ENCODE measurements at regions of chr18 and their contacts with region 1.

Region 1: DNA sequence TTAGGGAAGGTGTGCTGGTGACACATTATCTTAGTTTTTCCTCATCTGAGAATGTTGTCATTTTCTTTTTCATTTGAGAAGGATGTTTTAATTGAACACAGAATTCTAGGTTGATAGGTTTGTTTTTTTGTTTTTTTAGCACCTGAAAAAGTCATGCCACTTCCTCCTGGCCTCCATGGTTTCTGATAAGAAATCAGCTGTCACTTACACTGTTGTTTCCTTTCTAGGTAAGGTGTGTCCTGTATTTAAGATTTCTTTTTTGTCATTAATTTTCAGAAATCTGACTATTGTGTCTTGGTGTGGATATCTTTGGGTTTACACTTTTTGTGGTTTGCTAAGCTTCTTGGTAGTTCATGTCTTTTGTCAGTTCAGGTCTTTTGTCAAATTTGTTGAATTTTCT is 99.3 kb downstream of the ROCK1 start:
- DNase-seq: no peak
- ATAC-seq: no peak
- H3K4me3 Mint-ChIP-seq: no peak overlapping the region
- H3K27ac Mint-ChIP-seq: peak overlapping the region; percentile 2
- H3K4me1 Mint-ChIP-seq: no peaks in the 10 kb centered on the region
- H3K27me3 Mint-ChIP-seq: no peaks in the 10 kb centered on the region

Region 2: DNA sequence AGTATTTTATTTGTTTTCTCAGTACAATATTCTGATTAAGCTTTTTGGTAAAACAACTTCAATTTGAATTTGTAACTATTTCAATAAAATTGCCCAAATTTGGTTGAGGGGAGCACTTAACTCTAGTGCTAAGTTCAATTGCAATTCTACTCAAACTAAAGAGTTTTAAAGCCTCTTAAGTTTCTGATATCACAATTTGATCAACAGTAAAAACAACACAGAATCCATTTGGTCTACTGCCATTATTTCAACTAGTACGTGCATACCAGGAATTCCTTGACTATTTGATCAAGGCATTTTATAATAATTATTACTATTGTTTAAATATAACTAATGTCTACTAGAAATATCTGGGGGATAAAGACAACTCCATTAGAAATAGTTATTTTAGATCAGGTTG is 51.6 kb before region 1 on chr18:
- CTCF ChIA-PET with region 1: no interaction called
- POLR2A ChIA-PET with region 1: no interaction called
- intact Hi-C with region 1: loop called in 1 of 2 experiments (anchors 5 kb)
- DNase-seq: no peak
- ATAC-seq: no peak
- H3K4me3 Mint-ChIP-seq: no peak overlapping the region
- H3K27ac Mint-ChIP-seq: no peak overlapping the region
- H3K4me1 Mint-ChIP-seq: peaks cover 2% of the 10 kb centered on the region
- H3K27me3 Mint-ChIP-seq: no peaks in the 10 kb centered on the region

Region 3: GRCh38 chr18:20971886-20972267 is 40.4 kb before region 1 on chr18:
- CTCF ChIA-PET with region 1: no interaction called
- POLR2A ChIA-PET with region 1: no interaction called
- intact Hi-C with region 1: loop called in 1 of 2 experiments (anchors 5 kb)
- DNase-seq: no peak
- ATAC-seq: peak; percentile 64
- H3K4me3 Mint-ChIP-seq: no peak overlapping the region
- H3K27ac Mint-ChIP-seq: peak overlapping the region; percentile 22
- H3K4me1 Mint-ChIP-seq: no peaks in the 10 kb centered on the region
- H3K27me3 Mint-ChIP-seq: no peaks in the 10 kb centered on the region

Region 4: DNA sequence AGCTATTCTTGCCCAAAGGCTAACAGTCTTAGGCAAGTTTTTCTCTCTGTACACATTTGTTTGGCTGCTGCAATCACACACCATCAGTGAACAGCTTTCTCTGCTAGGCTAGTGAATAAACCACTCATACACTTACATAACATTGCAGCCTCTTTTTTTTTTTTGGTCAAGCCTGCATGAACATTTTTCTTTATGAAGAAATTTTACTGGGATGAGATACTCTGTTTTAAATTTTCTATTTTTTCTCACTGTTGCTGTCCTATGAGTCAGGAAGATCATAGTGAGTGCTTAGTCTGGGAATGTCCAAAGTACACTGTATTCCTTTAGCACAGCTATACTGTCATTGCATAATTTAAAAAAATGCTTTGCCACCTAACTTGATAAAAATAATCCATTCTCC is 40.8 kb after region 1 on chr18:
- CTCF ChIA-PET with region 1: no interaction called
- POLR2A ChIA-PET with region 1: no interaction called
- intact Hi-C with region 1: loop called in 1 of 2 experiments (anchors 5 kb)
- DNase-seq: no peak
- ATAC-seq: no peak
- H3K4me3 Mint-ChIP-seq: no peak overlapping the region
- H3K27ac Mint-ChIP-seq: no peak overlapping the region
- H3K4me1 Mint-ChIP-seq: peaks cover 32% of the 10 kb centered on the region
- H3K27me3 Mint-ChIP-seq: no peaks in the 10 kb centered on the region

Measured in activated CD4-positive, alpha-beta T cell treated with anti-CD3 and anti-CD28 coated beads for 36 hours (primary cell).